ENCODE measurements at regions of chr1 and their contacts with region 1.

Region 1: GRCh38 chr1:58816072-58816746 is 32.4 kb upstream of the JUN start:
- DNase-seq: peak; percentile 91
- H3K4me3 ChIP-seq: peak overlapping the region; percentile 34 to 68 (median 54)
- H3K27ac ChIP-seq: peak overlapping the region; percentile 100
- H3K4me1 ChIP-seq: peaks cover 72% of the 10 kb centered on the region
- H3K27me3 ChIP-seq: no peaks in the 10 kb centered on the region
- CTCF ChIP-seq: peak in 1 of 2 donors; percentile 14
- POLR2A ChIP-seq: peak; percentile 63

Region 2: GRCh38 chr1:58727363-58727762 is 88.8 kb before region 1 on chr1:
- CTCF ChIA-PET with region 1: no interaction called
- POLR2A ChIA-PET with region 1: no interaction called
- dilution Hi-C with region 1: no loop called
- intact Hi-C with region 1: loop called (anchors 1 kb)
- DNase-seq: peak; percentile 97
- H3K4me3 ChIP-seq: no peak overlapping the region
- H3K27ac ChIP-seq: peak overlapping the region; percentile 88
- H3K4me1 ChIP-seq: peaks cover 19% of the 10 kb centered on the region
- H3K27me3 ChIP-seq: no peaks in the 10 kb centered on the region
- CTCF ChIP-seq: no peak
- POLR2A ChIP-seq: no peak

Region 3: GRCh38 chr1:58848818-58849411 is 32.7 kb after region 1 on chr1:
- CTCF ChIA-PET with region 1: interaction called, 10 read pairs
- POLR2A ChIA-PET with region 1: interaction called, 6 read pairs
- dilution Hi-C with region 1: no loop called
- intact Hi-C with region 1: loop called (anchors 1 kb)
- DNase-seq: peak; percentile 95
- H3K4me3 ChIP-seq: no peak overlapping the region
- H3K27ac ChIP-seq: peak overlapping the region; percentile 95
- H3K4me1 ChIP-seq: peaks cover 30% of the 10 kb centered on the region
- H3K27me3 ChIP-seq: no peaks in the 10 kb centered on the region
- CTCF ChIP-seq: peak; percentile 8 to 24
- POLR2A ChIP-seq: no peak

Region 4: GRCh38 chr1:58903514-58904298 is 87.5 kb after region 1 on chr1:
- CTCF ChIA-PET with region 1: no interaction called
- POLR2A ChIA-PET with region 1: no interaction called
- dilution Hi-C with region 1: no loop called
- intact Hi-C with region 1: loop called (anchors 1 kb)
- DNase-seq: peak; percentile 94
- H3K4me3 ChIP-seq: peak overlapping the region in 2 of 3 experiments; percentile 24 to 41
- H3K27ac ChIP-seq: peak overlapping the region; percentile 64
- H3K4me1 ChIP-seq: peaks cover 46% of the 10 kb centered on the region
- H3K27me3 ChIP-seq: no peaks in the 10 kb centered on the region
- CTCF ChIP-seq: no peak
- POLR2A ChIP-seq: peak; percentile 95

Region 5: DNA sequence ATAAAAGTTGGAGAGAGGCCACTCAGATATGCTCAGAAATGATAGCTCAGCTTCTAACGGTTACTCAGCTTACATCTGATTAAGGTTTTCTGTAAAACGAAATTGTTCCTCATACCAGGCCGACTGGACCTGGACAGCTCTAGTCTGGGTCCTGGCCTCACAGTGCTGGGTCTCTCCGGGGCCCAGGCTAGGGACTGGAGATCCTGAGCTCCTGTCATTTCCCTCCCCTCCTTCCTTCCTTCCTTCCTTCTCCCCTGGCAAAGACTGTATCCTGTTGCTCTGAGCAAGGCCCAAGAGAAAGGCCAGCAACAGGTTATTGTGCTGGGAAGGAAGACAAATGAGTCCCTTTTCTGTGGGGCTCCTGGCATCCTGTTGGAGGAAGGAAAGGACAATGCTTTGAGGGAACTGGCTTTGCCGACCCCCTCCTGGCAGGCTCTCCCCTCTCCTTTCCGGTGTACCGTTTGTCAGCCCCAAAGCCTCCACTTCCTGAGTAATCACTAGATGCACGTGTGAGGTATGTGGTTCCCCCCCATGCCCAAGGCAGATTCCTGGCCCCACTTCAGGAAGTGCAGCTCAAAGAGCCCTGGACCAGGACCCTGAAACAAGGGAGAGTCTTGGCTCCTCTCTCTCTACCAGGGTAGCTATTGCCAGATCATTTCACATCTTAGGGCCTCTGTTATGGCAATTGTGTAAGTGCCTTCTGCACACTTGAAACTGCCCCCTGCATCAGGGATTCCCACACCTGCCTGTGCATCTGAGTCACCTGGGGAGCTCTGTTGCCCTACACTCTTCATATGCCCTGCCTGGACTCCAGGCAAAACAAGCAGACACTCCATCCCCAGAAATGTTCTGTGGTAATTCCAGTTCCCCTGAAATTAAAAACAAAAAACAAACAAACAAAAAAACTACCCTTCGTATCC is 268.0 kb after region 1 on chr1:
- CTCF ChIA-PET with region 1: interaction called, 5 read pairs
- POLR2A ChIA-PET with region 1: no interaction called
- dilution Hi-C with region 1: no loop called
- intact Hi-C with region 1: loop called (anchors 1 kb)
- DNase-seq: peak; percentile 67
- H3K4me3 ChIP-seq: no peak overlapping the region
- H3K27ac ChIP-seq: peak overlapping the region; percentile 49
- H3K4me1 ChIP-seq: peaks cover 23% of the 10 kb centered on the region
- H3K27me3 ChIP-seq: no peaks in the 10 kb centered on the region
- CTCF ChIP-seq: no peak
- POLR2A ChIP-seq: peak; percentile 20

Region 6: GRCh38 chr1:59296358-59297256 is 480.4 kb after region 1 on chr1 and contains the start of gene FGGY:
- CTCF ChIA-PET with region 1: no interaction called
- POLR2A ChIA-PET with region 1: no interaction called
- dilution Hi-C with region 1: no loop called
- intact Hi-C with region 1: loop called (anchors 1 kb)
- DNase-seq: peak; percentile 99
- H3K4me3 ChIP-seq: peak within 1 kb of the TSS; percentile 36 to 81 (median 64)
- H3K27ac ChIP-seq: peak within 1 kb of the TSS; percentile 92
- H3K4me1 ChIP-seq: peaks cover 30% of the 10 kb centered on the region
- H3K27me3 ChIP-seq: no peaks in the 10 kb centered on the region
- CTCF ChIP-seq: no peak
- POLR2A ChIP-seq: peak; percentile 95
- total RNA-seq, gene FGGY: 5.6 and 8.3 TPM in 2 replicates

Measured in endothelial cell of umbilical vein (primary cell).